Mammary epithelial cell (primary cell): ENCODE measurements at regions of chr3 and their contacts with region 1.

Region 1: DNA sequence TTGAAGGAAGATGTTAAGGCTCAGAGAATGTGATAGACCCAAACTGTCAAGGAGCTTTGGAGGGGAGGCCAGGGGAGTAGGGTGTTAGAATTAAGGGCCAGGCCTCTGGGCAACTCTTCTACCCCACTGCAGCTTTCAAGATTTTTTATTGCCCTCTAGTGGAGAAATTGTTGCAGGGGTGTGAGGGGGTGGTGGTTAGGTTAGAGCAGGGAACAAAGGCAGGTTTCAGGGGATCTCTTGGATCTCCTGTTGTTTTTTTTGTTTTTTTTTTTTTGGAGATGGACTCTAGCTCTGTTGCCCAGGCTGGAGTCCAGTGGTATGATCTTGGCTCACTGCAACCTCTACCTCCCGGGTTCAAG is 1.4 kb upstream of the SEC13 start:
- DNase-seq: peak; percentile 9
- H3K4me3 ChIP-seq: no peak overlapping the region
- H3K27ac ChIP-seq: no peak overlapping the region
- H3K4me1 ChIP-seq: peaks cover 9% of the 10 kb centered on the region
- H3K27me3 ChIP-seq: no peaks in the 10 kb centered on the region
- CTCF ChIP-seq: peak; percentile 46 to 52

Region 2: GRCh38 chr3:10228248-10228950 is 93.9 kb before region 1 on chr3:
- CTCF ChIA-PET with region 1: no interaction called
- dilution Hi-C with region 1: no loop called
- in situ Hi-C with region 1: no loop called
- intact Hi-C with region 1: no loop called
- DNase-seq: peak; percentile 79
- H3K4me3 ChIP-seq: no peak overlapping the region
- H3K27ac ChIP-seq: no peak overlapping the region
- H3K4me1 ChIP-seq: peaks cover 4% of the 10 kb centered on the region
- H3K27me3 ChIP-seq: no peaks in the 10 kb centered on the region
- CTCF ChIP-seq: no peak

Region 3: DNA sequence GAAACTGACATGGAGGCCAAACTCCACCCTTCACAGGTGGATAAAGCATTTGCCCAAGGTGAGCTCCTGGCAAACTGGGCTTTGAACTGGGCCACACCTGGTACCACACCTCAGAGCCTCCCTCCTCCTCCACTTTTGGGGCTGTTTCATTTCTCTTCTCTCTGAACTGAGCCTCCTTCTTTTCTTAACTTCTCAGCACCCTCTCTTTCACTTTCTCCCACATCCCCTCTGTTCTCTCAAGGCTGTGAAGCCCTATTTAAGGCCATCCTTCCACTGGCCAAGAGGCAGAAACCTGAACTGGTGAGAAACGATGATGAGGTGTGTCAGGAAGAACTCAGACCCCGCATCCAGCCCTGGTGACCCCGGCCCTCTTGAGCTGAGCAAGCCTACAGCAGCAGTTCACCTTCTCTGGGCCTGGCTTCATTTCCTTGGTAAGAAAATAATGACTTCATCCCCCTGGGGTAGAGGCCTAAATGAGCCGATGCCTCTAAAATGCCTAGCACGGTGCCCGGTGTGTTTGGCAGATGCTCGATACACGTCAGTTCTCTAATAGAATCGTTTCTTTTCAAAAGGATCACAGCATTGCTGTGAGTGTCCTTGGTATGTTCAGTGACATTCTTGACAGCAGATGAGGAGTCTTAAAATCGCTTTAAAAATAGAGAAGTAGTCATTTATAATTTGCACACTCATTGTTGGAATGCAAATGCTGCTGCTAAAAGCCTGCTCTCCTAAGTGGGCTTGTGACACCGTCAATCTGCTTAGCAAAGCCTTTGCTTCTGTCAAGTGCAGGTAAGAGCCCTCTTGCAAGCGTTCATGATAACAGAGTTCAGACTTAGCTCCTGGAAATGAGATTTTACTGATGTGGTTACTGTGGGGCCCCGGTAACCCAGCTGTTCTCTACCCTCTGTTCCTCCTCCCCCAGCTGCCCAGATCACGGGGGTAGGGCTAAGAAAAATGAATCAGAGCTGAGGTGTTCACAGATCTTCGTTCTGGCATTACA is 280.7 kb after region 1 on chr3:
- CTCF ChIA-PET with region 1: interaction called, 11 read pairs
- dilution Hi-C with region 1: no loop called
- in situ Hi-C with region 1: no loop called
- intact Hi-C with region 1: no loop called
- DNase-seq: no peak
- H3K4me3 ChIP-seq: no peak overlapping the region
- H3K27ac ChIP-seq: no peak overlapping the region
- H3K4me1 ChIP-seq: peaks cover 9% of the 10 kb centered on the region
- H3K27me3 ChIP-seq: peaks cover 5% of the 10 kb centered on the region
- CTCF ChIP-seq: no peak